ENCODE measurements at regions of chr3 and their contacts with region 1.

Region 1: GRCh38 chr3:41075975-41076374 is 123.3 kb upstream of the CTNNB1 start:
- DNase-seq: peak; percentile 47 to 55
- ATAC-seq: peak in 1 of 4 donors; percentile 34
- H3K4me3 ChIP-seq: no peak overlapping the region
- H3K27ac ChIP-seq: no peak overlapping the region
- H3K4me1 ChIP-seq: no peaks in the 10 kb centered on the region
- H3K27me3 ChIP-seq: no peaks in the 10 kb centered on the region
- CTCF ChIP-seq: no peak

Region 2: GRCh38 chr3:41961750-41962679 is 886.0 kb after region 1 on chr3 and contains the start of gene ULK4:
- intact Hi-C with region 1: loop called in 1 of 2 experiments (anchors 5 kb)
- DNase-seq: peak; percentile 97 to 99
- ATAC-seq: peak; percentile 98 to 99 (median 98)
- H3K4me3 ChIP-seq: peak within 1 kb of the TSS; percentile 89
- H3K27ac ChIP-seq: peak within 1 kb of the TSS; percentile 66
- H3K4me1 ChIP-seq: peaks cover 5% of the 10 kb centered on the region
- H3K27me3 ChIP-seq: no peaks in the 10 kb centered on the region
- CTCF ChIP-seq: no peak
- total RNA-seq, gene ULK4: 0.86 to 3.2 (median 0.99) TPM

Measured in psoas muscle (tissue), 8 donors.